Endothelial cell of umbilical vein (primary cell): ENCODE measurements at regions of chr3 and their contacts with region 1.

Region 1: GRCh38 chr3:187745201-187746058 is at the start of gene BCL6:
- DNase-seq: peak; percentile 95
- H3K4me3 ChIP-seq: peak within 1 kb of the TSS; percentile 50 to 88 (median 85)
- H3K27ac ChIP-seq: peak within 1 kb of the TSS; percentile 100
- H3K4me1 ChIP-seq: peaks cover 21% of the 10 kb centered on the region
- H3K27me3 ChIP-seq: no peaks in the 10 kb centered on the region
- CTCF ChIP-seq: no peak
- POLR2A ChIP-seq: peak; percentile 89
- total RNA-seq, gene BCL6: 9.6 and 12.1 TPM in 2 replicates

Region 2: DNA sequence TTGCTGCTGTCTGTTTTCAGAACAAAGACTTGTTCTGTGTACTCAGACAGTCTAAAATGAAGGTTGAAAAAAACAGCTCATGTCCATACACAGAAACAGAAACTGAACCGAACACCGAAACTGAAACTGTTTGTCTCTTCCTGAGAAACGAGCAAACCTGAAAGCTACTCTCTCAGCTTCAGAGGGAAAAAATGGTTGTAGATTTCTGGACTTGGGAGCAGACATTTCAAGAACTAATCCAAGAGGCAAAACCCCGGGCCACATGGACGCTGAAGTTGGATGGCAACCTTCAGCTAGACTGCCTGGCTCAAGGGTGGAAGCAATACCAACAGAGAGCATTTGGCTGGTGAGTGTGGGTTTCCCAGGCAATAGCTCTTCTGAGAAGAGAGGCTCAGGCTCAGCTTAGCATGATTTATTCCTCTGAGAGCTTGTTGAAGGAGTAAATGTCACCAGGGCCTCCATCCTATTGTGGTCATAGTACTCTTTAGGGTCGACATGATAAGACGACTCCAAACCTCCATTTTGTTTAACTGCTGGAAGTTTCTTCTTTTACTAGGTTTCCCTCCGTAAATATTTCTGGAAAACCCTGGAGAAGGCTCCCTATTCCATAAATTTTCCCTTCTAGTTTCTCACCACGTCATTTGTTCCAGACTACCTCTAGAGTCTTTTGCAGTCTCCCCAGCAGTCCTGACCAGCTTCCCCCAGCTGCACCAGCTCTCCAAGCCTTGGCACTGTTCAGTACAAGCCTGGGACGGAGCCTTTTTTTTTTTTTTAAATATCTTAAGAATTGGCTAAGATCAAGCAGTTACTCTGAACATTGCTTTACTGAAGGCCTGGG is 377.0 kb before region 1 on chr3 and contains the start of gene RTP4:
- CTCF ChIA-PET with region 1: no interaction called
- POLR2A ChIA-PET with region 1: no interaction called
- dilution Hi-C with region 1: no loop called
- intact Hi-C with region 1: no loop called
- DNase-seq: peak; percentile 61
- H3K4me3 ChIP-seq: peak within 1 kb of the TSS in 1 of 3 experiments; percentile 29
- H3K27ac ChIP-seq: no peak within 1 kb of the TSS
- H3K4me1 ChIP-seq: no peaks in the 10 kb centered on the region
- H3K27me3 ChIP-seq: no peaks in the 10 kb centered on the region
- CTCF ChIP-seq: no peak
- POLR2A ChIP-seq: no peak
- total RNA-seq, gene RTP4: 0.22 TPM in 1 of 2 replicates, not detected in the other

Region 3: DNA sequence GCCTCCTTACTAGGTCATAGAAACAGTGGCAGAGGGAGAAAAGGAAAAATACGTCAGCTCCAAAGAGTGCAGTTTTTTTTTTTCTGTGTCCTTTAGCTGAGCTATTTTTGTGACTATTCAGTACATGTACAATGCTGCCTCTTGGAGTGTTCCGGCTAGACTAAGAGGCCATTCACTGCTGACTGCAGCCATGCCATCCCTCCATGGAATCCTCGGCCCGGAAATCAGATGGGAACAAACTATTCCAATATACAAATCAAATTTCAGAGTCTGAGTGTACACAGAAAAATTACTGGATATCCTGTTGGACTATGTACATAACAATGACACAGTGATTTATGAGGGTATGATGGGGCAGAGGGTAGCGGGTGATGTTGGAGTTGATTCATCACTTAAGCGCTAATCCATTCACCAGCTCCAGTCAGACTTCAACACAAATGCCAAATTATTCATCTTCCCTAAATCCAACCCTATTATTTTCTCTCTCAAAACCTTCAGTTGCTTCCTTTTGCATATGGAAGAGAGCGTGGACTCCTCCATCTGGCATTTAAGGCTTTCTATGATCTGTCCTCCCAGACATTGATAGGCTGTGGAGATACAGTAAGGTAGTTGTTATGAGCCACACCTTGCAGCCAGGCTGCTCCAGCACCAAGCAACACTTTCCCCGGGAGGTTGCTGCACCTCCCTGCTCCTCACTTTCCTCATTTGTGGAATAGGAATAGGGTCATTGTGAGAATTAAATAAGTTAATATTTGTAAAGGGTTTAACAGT is 517.7 kb after region 1 on chr3:
- CTCF ChIA-PET with region 1: interaction called, 7 read pairs
- POLR2A ChIA-PET with region 1: interaction called, 7 read pairs
- dilution Hi-C with region 1: no loop called
- intact Hi-C with region 1: loop called (anchors 1 kb)
- DNase-seq: peak; percentile 97
- H3K4me3 ChIP-seq: no peak overlapping the region
- H3K27ac ChIP-seq: peak overlapping the region; percentile 88
- H3K4me1 ChIP-seq: peaks cover 79% of the 10 kb centered on the region
- H3K27me3 ChIP-seq: no peaks in the 10 kb centered on the region
- CTCF ChIP-seq: no peak
- POLR2A ChIP-seq: peak; percentile 65

Region 4: DNA sequence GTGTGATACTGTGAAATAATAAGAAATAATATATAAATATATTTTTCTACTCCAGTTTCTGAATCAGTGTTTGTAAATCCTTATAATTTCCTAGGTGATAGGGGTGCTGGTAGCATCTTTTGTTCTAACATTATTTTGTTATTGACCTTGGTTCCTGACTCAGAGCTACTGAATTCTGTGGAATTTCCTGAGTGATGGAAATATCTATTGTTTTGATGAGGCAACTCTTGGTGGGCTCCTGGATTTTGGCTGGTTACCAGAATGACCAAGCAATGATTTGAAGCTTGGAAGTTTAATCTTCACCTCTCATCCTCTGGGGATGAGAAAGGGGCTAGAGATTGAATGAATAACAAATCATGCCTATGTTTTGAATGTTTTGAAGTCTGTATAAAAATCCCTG is 785.8 kb after region 1 on chr3:
- CTCF ChIA-PET with region 1: interaction called, 12 read pairs
- POLR2A ChIA-PET with region 1: no interaction called
- dilution Hi-C with region 1: no loop called
- intact Hi-C with region 1: loop called (anchors 1 kb)
- DNase-seq: peak; percentile 87
- H3K4me3 ChIP-seq: no peak overlapping the region
- H3K27ac ChIP-seq: peak overlapping the region; percentile 85
- H3K4me1 ChIP-seq: peaks cover 37% of the 10 kb centered on the region
- H3K27me3 ChIP-seq: no peaks in the 10 kb centered on the region
- CTCF ChIP-seq: no peak
- POLR2A ChIP-seq: no peak

Region 5: GRCh38 chr3:188664795-188665194 is 919.4 kb after region 1 on chr3:
- CTCF ChIA-PET with region 1: interaction called, 8 read pairs
- POLR2A ChIA-PET with region 1: no interaction called
- dilution Hi-C with region 1: loop called (anchors 25 kb)
- intact Hi-C with region 1: loop called (anchors 2 kb)
- DNase-seq: peak; percentile 18
- H3K4me3 ChIP-seq: no peak overlapping the region
- H3K27ac ChIP-seq: no peak overlapping the region
- H3K4me1 ChIP-seq: peaks cover 3% of the 10 kb centered on the region
- H3K27me3 ChIP-seq: no peaks in the 10 kb centered on the region
- CTCF ChIP-seq: peak; percentile 29 to 30
- POLR2A ChIP-seq: no peak

Region 6: GRCh38 chr3:188788621-188789081 is 1043.2 kb after region 1 on chr3:
- CTCF ChIA-PET with region 1: interaction called, 4 read pairs
- POLR2A ChIA-PET with region 1: no interaction called
- dilution Hi-C with region 1: no loop called
- intact Hi-C with region 1: loop called (anchors 1 kb)
- DNase-seq: peak; percentile 90
- H3K4me3 ChIP-seq: no peak overlapping the region
- H3K27ac ChIP-seq: peak overlapping the region; percentile 85
- H3K4me1 ChIP-seq: peaks cover 19% of the 10 kb centered on the region
- H3K27me3 ChIP-seq: no peaks in the 10 kb centered on the region
- CTCF ChIP-seq: no peak
- POLR2A ChIP-seq: no peak

Region 7: DNA sequence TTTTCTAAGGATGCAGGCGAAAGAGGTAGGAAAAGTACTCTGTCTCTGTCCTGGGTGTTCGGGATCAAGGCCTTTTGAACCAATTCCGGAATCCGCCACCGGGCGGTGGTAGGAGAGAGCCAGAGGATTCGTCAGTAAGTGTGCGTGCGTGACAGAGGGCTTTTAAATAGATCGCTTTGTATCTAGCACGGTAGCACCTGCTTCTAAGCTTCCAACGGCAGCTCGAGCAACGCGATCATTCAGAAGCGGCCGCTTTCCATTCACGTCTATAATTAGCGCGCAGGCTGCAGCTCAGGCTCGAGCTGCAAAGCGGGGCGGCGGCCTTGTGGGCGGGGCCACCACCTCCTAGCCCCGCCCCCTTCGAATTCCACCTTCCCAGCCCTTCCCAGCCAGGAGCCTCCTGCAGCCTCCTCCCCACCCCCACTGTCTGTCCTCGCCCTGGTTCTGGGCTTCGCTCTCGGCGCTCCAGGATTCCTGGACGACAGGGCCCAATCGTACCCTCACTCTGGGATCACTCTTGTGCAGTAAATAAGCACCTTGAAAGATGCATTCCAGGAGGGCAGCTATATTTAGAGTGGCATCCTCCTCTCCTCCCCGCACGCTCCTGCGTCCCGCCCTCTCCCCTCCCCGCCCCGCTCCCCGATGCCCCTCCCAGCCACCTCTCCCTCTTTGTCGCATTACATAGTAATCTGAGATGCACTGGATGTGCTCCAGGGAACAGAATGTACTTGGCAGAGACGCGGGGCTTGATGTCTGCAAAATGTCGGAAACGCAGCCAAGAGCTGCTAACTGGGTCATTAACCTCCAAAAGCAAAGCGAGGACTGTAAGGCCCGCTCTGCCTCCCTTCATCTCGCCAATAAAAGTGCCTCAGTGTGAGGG is 1202.2 kb after region 1 on chr3:
- CTCF ChIA-PET with region 1: interaction called, 466 read pairs
- POLR2A ChIA-PET with region 1: interaction called, 8 read pairs
- dilution Hi-C with region 1: loop called (anchors 5 kb)
- intact Hi-C with region 1: loop called (anchors 1 kb)
- DNase-seq: peak; percentile 84
- H3K4me3 ChIP-seq: peak overlapping the region in 2 of 3 experiments; percentile 27 to 32
- H3K27ac ChIP-seq: peak overlapping the region; percentile 97
- H3K4me1 ChIP-seq: peaks cover 45% of the 10 kb centered on the region
- H3K27me3 ChIP-seq: no peaks in the 10 kb centered on the region
- CTCF ChIP-seq: peak; percentile 19 to 29
- POLR2A ChIP-seq: no peak